BJ (cell line): ENCODE measurements at regions of chr10 and their contacts with region 1.

Region 1: DNA sequence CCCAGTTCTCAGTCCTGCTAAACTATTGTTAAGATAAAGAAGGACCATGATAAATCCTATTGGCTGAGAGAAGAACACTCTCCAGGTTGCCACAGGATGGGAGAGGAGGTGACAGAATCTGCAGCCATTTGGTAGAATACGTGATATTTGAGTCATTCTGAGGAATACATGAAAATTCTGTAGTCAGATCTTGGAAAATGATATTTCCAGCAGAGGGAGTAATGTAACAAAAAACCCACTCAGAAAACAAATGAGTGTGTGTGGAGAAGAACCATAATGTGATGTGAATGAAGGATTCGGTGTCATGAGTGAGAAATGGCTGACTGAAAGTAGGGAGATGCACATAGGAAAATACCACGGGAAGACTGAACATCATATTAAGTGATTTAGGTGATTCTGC is 128.5 kb upstream of the PFKP start:
- DNase-seq: no peak
- H3K4me3 ChIP-seq: no peak overlapping the region
- H3K27me3 ChIP-seq: peaks cover 14% of the 10 kb centered on the region
- CTCF ChIP-seq: peak; percentile 23; the same call in 1 of the 2 replicates

Region 2: GRCh38 chr10:2927958-2928840 is 10.7 kb before region 1 on chr10:
- CTCF ChIA-PET with region 1: interaction called, 18 read pairs
- POLR2A ChIA-PET with region 1: no interaction called
- DNase-seq: no peak
- H3K4me3 ChIP-seq: no peak overlapping the region
- H3K27me3 ChIP-seq: peaks cover 12% of the 10 kb centered on the region
- CTCF ChIP-seq: peak; percentile 81

Region 3: DNA sequence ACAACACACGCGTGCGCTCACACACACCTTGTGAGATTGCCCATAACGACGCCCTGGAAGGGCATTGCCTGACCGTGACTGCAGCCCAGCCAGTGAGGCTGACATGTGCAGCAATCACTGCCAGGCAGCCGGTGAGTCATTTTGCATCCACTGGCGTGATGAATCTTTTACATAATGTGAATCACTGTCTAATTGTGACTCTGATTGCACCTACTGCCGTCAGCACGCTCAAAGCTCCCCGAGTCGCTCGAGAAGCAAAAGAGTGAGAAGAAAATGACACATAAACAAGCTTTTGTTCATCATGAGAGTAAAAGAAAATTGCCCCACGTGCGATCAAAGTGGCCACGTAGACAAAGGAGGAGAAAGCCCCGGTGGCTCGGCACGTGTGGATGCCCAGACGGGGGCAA is 11.1 kb after region 1 on chr10:
- CTCF ChIA-PET with region 1: no interaction called
- POLR2A ChIA-PET with region 1: no interaction called
- DNase-seq: no peak
- H3K4me3 ChIP-seq: no peak overlapping the region
- H3K27me3 ChIP-seq: peaks cover 2% of the 10 kb centered on the region
- CTCF ChIP-seq: no peak